Head of caudate nucleus (tissue), 42 donors: ENCODE measurements at regions of chr3 and their contacts with region 1.

Region 1: GRCh38 chr3:9396700-9397521 is 504 bp upstream of the SETD5 start:
- DNase-seq: peak; percentile 95 to 99 (median 98)

Region 2: DNA sequence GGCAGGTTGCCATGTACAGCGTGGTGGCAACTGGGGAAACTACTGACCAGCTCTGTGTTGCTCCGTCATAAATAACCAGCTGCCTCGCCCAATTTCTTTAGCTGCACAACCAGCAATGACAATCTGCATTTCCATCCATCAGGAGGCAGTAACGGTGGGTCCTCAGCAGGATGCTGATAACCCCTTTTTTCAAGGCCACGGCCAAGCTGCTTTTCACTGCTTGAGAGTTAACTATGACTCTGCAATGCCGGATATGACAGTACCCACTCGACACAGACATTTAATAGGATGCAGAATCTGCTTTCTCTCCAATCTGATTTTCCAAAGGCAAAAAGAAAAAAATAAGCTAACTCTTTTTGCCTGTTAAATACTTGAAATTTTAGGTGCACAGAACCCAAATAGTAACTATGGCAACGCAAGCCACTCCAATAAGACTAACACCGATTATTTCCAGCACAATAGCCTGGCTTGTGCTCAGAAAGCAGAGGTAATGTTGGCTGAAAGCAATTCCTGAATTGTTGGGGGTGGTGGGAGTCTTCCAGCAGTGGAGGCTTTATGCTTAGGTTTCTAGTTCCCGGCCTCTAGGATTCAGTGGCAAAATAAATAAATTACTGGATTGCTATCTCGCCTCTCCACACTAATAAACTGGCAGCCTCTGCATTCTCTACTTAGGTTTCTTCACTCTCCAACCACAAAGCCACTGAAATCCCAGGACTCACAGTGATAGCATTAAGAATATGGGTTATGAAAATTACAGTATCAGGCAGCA is 116.3 kb before region 1 on chr3:
- intact Hi-C with region 1: no loop called
- DNase-seq: peak in 7 of 42 donors; percentile 2 to 49 (median 16)

Region 3: DNA sequence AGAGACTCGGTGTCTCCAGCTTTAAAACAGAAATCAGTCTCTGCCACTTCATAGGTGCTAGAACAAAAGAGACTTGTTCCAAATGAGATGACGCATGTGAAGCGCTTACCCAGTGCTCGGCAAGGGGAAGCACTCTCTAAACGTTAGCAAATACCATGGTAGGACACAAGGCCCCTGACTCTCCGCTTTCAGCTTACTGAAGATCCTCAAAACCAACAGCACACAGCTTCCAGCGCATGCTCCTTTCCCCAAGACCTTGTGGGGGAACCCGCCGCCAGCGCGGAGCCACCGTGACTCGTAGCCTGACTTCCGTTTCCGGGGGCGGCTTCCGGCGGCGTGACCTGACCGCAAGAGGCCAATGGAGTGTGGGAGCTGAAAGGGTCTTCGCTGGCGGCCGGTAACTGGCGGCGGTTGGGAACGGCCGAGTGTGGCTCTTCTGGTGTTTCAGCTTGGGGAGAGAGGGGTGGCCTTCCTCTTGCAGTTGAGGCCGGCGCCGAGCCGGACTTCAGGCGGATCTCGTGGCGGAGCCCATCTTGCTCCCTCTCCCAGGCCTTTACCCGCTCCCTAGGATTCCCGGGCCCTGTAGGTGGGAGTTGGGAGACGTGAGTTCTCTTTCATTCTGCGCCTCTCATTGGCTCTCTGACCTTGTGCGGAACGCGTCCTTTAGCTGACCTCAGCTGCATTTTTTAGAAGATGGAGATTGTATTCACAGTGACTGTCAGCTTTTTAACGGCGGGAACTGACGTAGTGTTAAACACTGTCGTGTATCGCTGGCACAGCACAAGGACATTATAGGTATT is 34.0 kb before region 1 on chr3 and contains the start of gene THUMPD3:
- intact Hi-C with region 1: loop called (anchors 2 kb)
- DNase-seq: peak; percentile 89 to 98 (median 96)

Region 4: GRCh38 chr3:9422712-9423424 is 26.0 kb after region 1 on chr3:
- intact Hi-C with region 1: loop called (anchors 2 kb)
- DNase-seq: peak in 41 of 42 donors; percentile 53 to 95 (median 85)